ENCODE measurements at regions of chr16 and their contacts with region 1.

Region 1: DNA sequence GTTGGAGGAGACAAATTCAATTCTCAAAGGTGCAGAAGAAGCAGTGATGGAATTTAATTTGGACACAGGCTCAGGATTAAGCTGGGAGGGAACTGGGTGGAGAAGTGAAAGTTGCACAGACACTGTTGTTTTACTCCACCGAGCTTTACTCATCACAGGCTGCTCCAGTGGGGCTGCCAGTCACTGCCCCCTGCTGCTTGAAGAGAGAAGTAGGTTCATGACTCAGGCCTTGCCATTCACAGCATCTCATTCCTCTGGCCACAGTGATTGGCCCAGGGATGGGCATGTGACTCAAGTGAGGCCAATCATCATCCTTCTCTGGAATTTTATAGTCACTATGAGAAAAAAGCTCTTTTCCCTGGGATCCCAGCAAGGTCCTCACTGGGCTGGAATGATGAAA is 11.8 kb downstream of the GNAO1 start:
- DNase-seq: peak; percentile 65
- H3K4me3 Mint-ChIP-seq: no peak overlapping the region
- H3K27ac Mint-ChIP-seq: no peak overlapping the region
- H3K4me1 Mint-ChIP-seq: no peaks in the 10 kb centered on the region
- H3K27me3 Mint-ChIP-seq: peaks cover 9% of the 10 kb centered on the region

Region 2: DNA sequence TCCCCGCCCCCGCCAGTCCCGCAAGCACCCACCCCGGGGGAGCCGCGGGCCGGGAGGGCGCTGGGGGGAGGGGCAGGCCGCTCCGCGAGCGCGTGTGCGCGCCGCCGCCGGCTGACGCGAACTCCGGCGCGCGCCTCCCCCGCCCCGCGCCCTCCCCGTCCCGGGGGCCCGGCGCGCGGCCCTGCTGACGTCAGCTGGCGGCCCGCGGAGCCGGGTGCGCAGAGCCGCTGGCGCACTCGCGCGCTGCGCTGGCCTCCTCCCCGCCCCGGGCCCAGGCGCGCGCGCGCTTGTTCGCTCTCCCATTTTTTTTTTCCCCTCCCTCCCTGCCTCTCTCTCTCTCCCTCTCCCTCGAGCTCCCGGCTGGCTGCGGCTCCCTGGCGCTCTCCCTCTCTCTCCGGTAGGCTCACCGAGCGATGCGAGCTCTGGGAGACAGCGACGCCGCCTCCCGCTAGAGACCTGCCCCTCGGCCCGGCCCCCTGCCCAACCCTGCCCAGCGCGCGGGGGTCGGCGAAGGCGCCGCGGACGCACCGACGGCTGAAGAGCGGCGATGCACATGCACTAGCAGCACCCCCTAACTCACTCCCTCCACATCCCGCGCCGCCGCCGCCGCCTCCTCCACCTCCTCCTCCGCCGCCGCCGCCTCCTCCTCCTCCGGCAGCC is 11.8 kb before region 1 on chr16 and contains the start of gene GNAO1:
- CTCF ChIA-PET with region 1: interaction called, 10 read pairs
- POLR2A ChIA-PET with region 1: interaction called, 4 read pairs
- DNase-seq: peak; percentile 60
- H3K4me3 Mint-ChIP-seq: peak within 1 kb of the TSS; percentile 72
- H3K27ac Mint-ChIP-seq: no peak within 1 kb of the TSS
- H3K4me1 Mint-ChIP-seq: peaks cover 29% of the 10 kb centered on the region
- H3K27me3 Mint-ChIP-seq: peaks cover 78% of the 10 kb centered on the region
- total RNA-seq, gene GNAO1: 1.8 to 2.3 TPM

Region 3: DNA sequence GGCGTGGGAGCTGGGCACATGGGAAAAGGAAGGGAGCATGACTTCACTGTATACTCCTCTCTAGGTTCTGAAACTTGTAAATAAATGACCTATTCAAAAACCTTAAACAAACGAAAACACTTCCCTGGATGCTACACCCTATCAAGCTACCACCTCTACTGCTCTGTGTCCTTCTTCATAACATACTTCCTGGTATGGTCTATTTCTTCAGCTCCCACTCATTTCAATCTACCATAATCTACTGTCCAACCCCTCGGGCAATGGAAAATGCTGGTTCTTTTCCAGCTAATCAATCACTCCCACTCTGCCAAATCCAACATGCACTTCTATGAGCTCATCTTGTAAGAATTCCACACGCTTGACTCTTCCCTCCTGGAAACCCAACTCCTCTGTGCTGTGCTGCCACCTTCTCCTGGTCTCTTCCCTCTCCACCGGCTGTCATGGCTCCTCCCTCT is 179.9 kb after region 1 on chr16:
- CTCF ChIA-PET with region 1: no interaction called
- POLR2A ChIA-PET with region 1: no interaction called
- DNase-seq: no peak
- H3K4me3 Mint-ChIP-seq: no peak overlapping the region
- H3K27ac Mint-ChIP-seq: no peak overlapping the region
- H3K4me1 Mint-ChIP-seq: no peaks in the 10 kb centered on the region
- H3K27me3 Mint-ChIP-seq: no peaks in the 10 kb centered on the region

Measured in activated CD4-positive, alpha-beta memory T cell treated with anti-CD3 and anti-CD28 coated beads, Interleukin-2, amount 10 ng/mL, durations not matched to agents 7 days and 5 days (primary cell).